Activated T-helper 2 cell treated with anti-CD3 and anti-CD28 coated beads, Interferon-gamma antibody, Interleukin-2, Interleukin-4, amounts not matched to agents 10 μg/mL and 5 μg/mL and 100 μg/mL, durations not matched to agents 14 hours and 24 hours and 36 hours (primary cell): ENCODE measurements at regions of chr2 and their contacts with region 1.

Region 1: DNA sequence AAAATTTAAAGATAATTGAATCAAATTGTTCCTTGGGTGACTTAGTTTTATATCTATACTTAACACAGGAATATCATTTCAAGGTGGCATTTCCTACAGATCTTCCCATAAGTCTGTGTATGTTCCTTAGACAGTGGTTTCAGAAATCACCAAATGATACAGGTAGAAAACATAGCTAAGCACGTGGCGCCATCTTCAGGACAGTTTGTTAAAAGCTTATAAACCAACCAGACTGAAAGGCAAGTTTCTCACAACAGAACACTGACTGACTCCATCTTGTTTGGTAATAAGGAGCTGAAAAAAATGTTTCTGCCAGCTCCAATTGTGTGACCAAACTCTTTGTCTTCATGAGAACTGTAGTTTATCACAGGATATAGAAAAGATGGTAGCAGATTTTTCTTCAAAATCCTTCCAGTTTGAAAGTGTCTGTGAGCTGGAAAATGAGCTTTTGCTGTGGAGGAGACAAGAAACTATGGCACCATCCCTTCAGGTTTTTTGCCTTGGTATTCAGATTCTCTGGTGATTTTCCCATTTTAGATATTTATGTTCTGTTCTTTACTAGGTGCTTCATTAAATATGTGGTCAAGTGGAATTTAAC is 34.8 kb upstream of the NEUROD1 start:
- DNase-seq: peak; percentile 54
- H3K4me3 Mint-ChIP-seq: no peak overlapping the region
- H3K27ac Mint-ChIP-seq: no peak overlapping the region
- H3K4me1 Mint-ChIP-seq: peaks cover 4% of the 10 kb centered on the region
- H3K27me3 Mint-ChIP-seq: peaks cover 10% of the 10 kb centered on the region

Region 2: GRCh38 chr2:180124273-180125139 is 1590.6 kb before region 1 on chr2:
- intact Hi-C with region 1: loop called (anchors 5 kb)
- DNase-seq: no peak
- H3K4me3 Mint-ChIP-seq: no peak overlapping the region
- H3K27ac Mint-ChIP-seq: no peak overlapping the region
- H3K4me1 Mint-ChIP-seq: peaks cover 2% of the 10 kb centered on the region
- H3K27me3 Mint-ChIP-seq: peaks cover 19% of the 10 kb centered on the region

Region 3: GRCh38 chr2:181077128-181077709 is 637.9 kb before region 1 on chr2:
- intact Hi-C with region 1: loop called (anchors 1 kb)
- DNase-seq: peak; percentile 10
- H3K4me3 Mint-ChIP-seq: no peak overlapping the region
- H3K27ac Mint-ChIP-seq: no peak overlapping the region
- H3K4me1 Mint-ChIP-seq: peaks cover 5% of the 10 kb centered on the region
- H3K27me3 Mint-ChIP-seq: no peaks in the 10 kb centered on the region

Region 4: DNA sequence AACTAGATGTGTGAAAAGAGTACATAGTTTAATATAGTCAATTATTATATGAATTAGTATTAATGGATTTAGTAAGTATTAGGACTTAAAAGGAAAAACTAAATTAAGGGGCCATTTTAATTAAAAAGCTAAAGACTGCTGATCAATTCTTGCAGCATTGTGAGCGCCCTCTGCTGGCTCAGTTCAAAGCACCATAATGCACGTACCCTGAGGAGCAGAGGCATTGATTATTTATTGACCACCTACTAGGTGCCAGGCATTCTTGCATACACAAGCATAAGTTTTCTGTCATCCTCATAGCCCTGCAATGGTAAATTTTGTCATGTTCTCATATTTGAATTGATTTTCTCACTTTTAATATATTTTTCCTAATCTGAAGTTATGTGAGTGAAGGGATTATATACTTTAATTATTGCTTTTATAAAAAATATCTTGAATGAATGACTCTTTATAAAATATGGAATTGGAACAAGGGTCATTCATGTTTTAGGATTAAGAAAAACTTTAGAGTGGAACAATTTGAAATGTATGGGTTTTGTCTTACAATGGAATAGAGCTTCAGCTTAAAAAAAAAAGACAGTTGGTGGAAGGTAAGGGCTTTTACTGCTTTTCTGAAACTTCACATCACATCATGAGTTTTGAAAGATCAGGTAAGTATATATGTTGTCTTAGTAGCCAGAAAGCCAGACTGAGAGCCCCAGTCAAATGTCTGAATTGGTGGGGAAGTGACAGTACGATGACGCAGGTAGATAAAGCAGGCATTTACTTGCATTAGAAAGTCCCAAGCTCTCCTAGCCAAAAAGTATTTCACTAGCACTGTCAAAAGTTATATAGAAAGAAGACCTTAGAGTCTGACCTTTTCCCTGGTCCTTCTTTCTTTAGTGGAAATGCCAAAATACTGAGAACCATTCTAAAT is 248.2 kb before region 1 on chr2:
- intact Hi-C with region 1: loop called (anchors 10 kb)
- DNase-seq: peak; percentile 61
- H3K4me3 Mint-ChIP-seq: peak overlapping the region; percentile 34
- H3K27ac Mint-ChIP-seq: peak overlapping the region; percentile 70
- H3K4me1 Mint-ChIP-seq: peaks cover 77% of the 10 kb centered on the region
- H3K27me3 Mint-ChIP-seq: no peaks in the 10 kb centered on the region

Region 5: DNA sequence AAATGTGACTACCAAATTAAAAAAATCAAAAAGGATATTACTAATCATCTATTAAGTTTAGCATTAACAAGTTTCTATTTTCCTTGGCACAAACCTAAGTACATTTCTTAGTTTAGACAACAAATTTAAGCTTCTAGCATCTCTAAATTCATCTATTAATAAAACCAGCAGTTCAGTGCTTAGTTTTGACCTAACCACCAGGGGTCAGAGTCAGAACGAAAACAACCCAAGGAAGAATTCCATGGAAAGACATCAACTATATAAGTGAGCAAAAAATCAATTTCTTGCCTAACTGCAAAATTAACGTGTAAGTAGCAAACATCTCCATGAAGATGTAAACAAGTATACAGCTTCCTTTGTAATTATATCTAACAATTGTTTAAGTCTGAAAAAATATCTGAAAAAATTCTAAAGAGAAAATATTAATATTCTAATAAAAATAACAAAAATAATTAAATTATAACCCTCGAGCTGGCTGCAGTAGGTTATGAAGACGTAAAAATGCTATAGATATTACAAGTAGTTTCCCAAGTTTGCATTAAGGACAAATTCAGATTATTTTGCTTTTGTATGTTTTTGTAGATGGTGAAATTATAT is 141.9 kb before region 1 on chr2:
- intact Hi-C with region 1: loop called (anchors 10 kb)
- DNase-seq: no peak
- H3K4me3 Mint-ChIP-seq: no peak overlapping the region
- H3K27ac Mint-ChIP-seq: no peak overlapping the region
- H3K4me1 Mint-ChIP-seq: peaks cover 3% of the 10 kb centered on the region
- H3K27me3 Mint-ChIP-seq: peaks cover 26% of the 10 kb centered on the region